Sigmoid colon (tissue), 7 donors: ENCODE measurements at regions of chr17 and their contacts with region 1.

Region 1: GRCh38 chr17:77476931-77477877 is 336.4 kb downstream of the SEC14L1 start:
- DNase-seq: peak; percentile 97
- H3K4me3 ChIP-seq: peak overlapping the region in 1 of 4 donors; percentile 4
- H3K27ac ChIP-seq: peak overlapping the region; percentile 85 to 92 (median 91)
- H3K4me1 ChIP-seq: peaks cover 3 to 100% (median 100%) of the 10 kb centered on the region in 4 donors
- H3K27me3 ChIP-seq: no peaks in the 10 kb centered on the region
- CTCF ChIP-seq: peak in 1 of 4 experiments; percentile 42
- EP300 ChIP-seq: peak in 2 of 4 donors; percentile 64 to 71
- POLR2A ChIP-seq: peak in 1 of 2 donors; percentile 74

Region 2: GRCh38 chr17:77372444-77373298 is 104.5 kb before region 1 on chr17:
- intact Hi-C with region 1: loop called (anchors 5 kb)
- DNase-seq: peak; percentile 95
- H3K4me3 ChIP-seq: peak overlapping the region; percentile 83 to 99 (median 89)
- H3K27ac ChIP-seq: peak overlapping the region; percentile 95 to 99 (median 99)
- H3K4me1 ChIP-seq: peaks cover 0 to 68% (median 58%) of the 10 kb centered on the region in 4 donors
- H3K27me3 ChIP-seq: no peaks in the 10 kb centered on the region
- CTCF ChIP-seq: no peak
- EP300 ChIP-seq: no peak
- POLR2A ChIP-seq: peak in 1 of 2 donors; percentile 17

Region 3: DNA sequence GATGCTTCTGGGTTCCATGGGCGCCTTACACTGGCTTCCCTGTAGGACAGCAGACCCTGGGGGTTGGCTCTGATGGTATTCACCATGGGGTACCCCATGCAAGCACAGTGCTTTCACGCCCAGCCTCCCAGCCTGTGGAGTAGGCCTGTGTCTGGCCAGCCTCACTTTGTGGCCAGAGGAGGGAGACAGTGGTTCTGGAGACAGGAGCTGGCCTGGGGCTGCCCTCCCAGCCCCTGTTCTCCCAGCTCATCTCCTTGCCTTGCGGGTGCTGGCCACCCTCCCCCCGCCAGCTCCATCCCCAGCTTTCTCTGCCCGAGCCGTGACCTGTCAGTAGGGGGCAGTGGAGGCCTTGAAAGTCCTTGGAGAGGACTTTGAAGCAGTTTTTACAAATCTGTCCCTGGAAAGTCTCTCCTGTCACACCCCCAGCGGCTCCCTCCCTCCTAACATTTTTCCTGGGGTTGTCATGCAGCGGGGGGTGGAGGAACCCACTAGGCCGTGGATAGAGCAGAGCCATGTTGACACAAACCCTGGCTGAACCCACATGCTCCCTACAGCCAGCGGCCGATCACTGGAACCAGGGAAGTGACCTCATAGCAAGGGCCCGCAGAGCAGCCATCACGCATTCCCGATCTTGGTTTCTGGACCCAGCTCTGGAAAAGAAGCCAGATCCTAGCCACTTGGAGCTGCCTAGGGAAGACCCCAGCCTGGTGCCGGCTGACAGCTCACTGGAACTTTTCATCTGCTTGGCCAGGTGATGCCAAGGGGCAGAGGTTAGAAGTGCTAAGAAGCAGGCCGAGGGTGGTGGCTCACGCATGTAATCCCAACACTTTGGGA is 47.1 kb before region 1 on chr17:
- intact Hi-C with region 1: loop called (anchors 2 kb)
- DNase-seq: peak; percentile 99
- H3K4me3 ChIP-seq: no peak overlapping the region
- H3K27ac ChIP-seq: peak overlapping the region; percentile 96 to 100 (median 98)
- H3K4me1 ChIP-seq: peaks cover 0 to 100% (median 99%) of the 10 kb centered on the region in 4 donors
- H3K27me3 ChIP-seq: no peaks in the 10 kb centered on the region
- CTCF ChIP-seq: peak in 3 of 4 experiments; percentile 78 to 95 (median 81)
- EP300 ChIP-seq: peak in 3 of 4 donors; percentile 87 to 96 (median 90)
- POLR2A ChIP-seq: no peak

Region 4: GRCh38 chr17:77528516-77529327 is 51.5 kb after region 1 on chr17:
- intact Hi-C with region 1: no loop called
- DNase-seq: peak; percentile 37
- H3K4me3 ChIP-seq: peak overlapping the region in 2 of 4 donors; percentile 25 to 30
- H3K27ac ChIP-seq: no peak overlapping the region
- H3K4me1 ChIP-seq: peaks cover 0 to 11% (median 10%) of the 10 kb centered on the region in 4 donors
- H3K27me3 ChIP-seq: peaks cover 10 to 41% (median 24%) of the 10 kb centered on the region in 3 donors
- CTCF ChIP-seq: no peak
- EP300 ChIP-seq: no peak
- POLR2A ChIP-seq: no peak